Activated T-helper 2 cell treated with anti-CD3 and anti-CD28 coated beads, Interferon-gamma antibody, Interleukin-2, Interleukin-4, amounts not matched to agents 10 μg/mL and 5 μg/mL and 100 μg/mL, durations not matched to agents 14 hours and 24 hours and 36 hours (primary cell): ENCODE measurements at regions of chr17 and their contacts with region 1.

Region 1: DNA sequence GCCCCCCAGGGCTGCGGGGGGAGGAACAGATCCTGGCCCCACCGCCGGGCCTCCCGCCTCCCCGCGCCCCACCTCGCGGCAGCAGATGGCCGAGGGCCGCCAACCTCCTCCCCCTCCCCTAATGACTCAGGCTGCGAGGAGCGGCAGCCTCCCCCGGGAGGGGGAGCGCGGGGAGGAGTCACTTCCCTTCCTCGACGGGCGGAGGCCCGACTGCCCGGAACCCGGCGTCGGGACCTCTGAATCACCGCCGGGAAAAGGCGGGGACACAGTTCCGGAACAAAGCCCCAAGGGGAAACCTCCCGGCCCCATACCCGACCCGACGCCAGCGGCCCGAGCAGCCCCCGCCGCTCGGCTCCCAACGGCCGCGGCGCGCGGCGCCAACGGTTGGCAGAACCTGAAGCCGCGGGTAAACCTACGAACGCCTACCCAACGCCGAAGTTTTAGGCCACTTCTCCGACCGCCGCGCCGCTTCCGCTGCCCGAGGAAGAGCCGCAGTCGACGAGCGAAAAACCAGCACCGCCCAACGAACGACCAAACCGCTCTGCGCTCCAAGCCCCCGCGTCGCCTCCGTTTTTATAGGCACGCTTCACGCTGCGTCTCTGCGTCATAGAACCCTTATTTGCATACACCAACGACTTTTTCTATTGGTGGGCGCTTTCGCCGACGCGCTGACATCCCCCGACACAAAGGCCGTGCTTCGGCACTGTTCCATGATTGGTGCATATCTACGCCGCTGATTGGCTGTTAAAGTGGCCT is 5.2 kb upstream of the UNK start:
- DNase-seq: peak; percentile 96
- H3K4me3 Mint-ChIP-seq: peak overlapping the region; percentile 97
- H3K27ac Mint-ChIP-seq: peak overlapping the region; percentile 98
- H3K4me1 Mint-ChIP-seq: peaks cover 37% of the 10 kb centered on the region
- H3K27me3 Mint-ChIP-seq: no peaks in the 10 kb centered on the region

Region 2: GRCh38 chr17:75764711-75765421 is 14.5 kb before region 1 on chr17 and contains the start of gene GALK1:
- intact Hi-C with region 1: loop called (anchors 2 kb)
- DNase-seq: peak; percentile 70
- H3K4me3 Mint-ChIP-seq: peak within 1 kb of the TSS; percentile 86
- H3K27ac Mint-ChIP-seq: peak within 1 kb of the TSS; percentile 65
- H3K4me1 Mint-ChIP-seq: peaks cover 9% of the 10 kb centered on the region
- H3K27me3 Mint-ChIP-seq: peaks cover 3% of the 10 kb centered on the region
- total RNA-seq, gene GALK1: 55.4 and 63.7 TPM in 2 replicates